CD8-positive, alpha-beta T cell (primary cell): ENCODE measurements at regions of chr11 and their contacts with region 1.

Region 1: DNA sequence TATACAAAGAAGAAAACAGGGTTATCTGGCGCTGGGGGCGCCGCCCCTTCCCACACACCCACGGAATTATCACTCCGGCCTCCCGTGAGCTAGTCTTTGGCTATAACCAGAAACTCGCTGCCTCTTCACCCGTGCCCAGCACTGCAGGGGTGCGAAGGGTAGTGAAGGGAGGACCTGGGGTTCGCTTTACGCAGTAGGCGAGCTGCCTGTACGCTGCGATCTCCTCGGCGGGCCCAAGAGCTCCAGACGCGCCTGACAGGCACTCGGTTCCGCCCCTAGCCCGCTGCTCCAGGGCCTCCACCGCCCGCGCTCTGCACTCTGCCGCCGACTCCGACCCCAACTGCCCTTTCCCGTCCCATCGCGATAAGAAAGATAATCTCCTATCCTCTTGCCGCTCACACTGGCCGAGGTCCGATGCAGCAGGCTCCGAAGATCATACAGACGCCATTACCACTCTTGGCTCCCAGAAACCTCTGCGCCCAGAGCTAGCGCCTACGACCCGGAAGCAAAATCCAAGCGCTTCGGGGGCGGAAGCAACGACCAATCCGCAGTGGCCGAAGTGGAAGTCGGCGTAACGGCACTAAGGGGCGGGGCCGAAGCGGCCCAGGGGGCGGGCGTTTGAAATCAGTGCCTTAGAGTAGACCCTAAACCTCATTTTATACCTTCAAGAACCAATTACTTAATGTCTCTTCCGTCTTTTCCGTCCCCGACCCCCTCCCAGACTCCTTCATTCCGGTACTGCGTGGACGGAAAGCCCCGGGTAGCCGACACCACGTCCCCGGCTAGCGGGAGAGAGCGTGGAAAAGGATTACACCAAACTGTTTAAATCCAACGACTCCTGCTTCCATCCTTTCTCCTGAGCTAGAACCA is at the starts of genes CWC15 and KDM4D:
- DNase-seq: peak; percentile 90 to 97 (median 95)
- ATAC-seq: peak; percentile 98
- H3K4me3 ChIP-seq: peak within 1 kb of the TSS; percentile 70 to 90
- H3K4me3 Mint-ChIP-seq: peak within 1 kb of the TSS; percentile 99
- H3K27ac ChIP-seq: peak within 1 kb of the TSS; percentile 72 to 83
- H3K27ac Mint-ChIP-seq: peak within 1 kb of the TSS; percentile 99
- H3K4me1 ChIP-seq: peaks cover 14% of the 10 kb centered on the region
- H3K4me1 Mint-ChIP-seq: peaks cover 34% of the 10 kb centered on the region
- H3K27me3 ChIP-seq: no peaks in the 10 kb centered on the region
- H3K27me3 Mint-ChIP-seq: no peaks in the 10 kb centered on the region
- CTCF ChIP-seq: no peak
- total RNA-seq, gene CWC15: 127 to 129 TPM
- total RNA-seq, gene KDM4D: 0.14 TPM in 1 of 2 experiments, not detected in the other

Region 2: DNA sequence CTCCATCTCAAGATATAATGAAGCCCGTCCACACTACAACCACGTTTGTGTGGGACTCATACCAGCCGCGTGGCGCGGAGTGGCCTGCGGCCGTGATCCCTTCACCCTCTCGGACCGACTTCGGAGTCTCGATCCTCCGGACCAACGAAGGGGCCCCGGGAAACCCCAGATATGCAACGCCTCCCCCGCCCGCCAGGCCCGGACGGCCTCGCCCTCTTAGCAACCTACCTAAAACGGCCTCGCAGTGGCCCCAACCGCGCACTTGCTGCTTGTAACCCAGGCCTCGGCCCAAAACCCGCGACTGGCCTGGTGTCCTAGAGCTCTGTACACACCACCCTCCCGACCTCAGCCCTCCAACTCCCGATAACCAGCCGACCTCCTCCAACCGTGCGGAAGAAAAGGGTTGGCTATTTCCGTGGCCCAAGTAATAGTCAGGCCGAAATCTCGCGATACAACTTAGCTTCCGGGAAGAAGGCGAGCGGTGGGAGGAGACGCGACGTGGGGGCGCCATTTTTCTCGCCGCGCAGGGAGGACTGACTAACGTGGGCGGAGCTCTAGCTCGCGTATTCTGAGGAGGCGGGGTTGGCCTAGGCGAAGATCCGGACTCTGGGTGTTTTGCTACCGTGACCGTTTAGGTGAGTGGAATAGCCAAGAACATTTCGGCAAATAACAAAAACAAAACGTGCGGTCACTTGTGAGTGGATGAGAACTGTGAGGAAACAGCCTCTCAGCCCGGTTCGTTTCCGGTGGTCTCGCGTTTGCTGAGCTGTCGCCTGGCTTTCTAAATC is 1232.0 kb before region 1 on chr11 and contains the starts of genes C11orf54 and TAF1D:
- CTCF ChIA-PET with region 1: no interaction called
- POLR2A ChIA-PET with region 1: interaction called, 3 read pairs
- intact Hi-C with region 1: loop called (anchors 2 to 10 kb)
- DNase-seq: peak; percentile 92 to 99 (median 96)
- ATAC-seq: peak; percentile 91
- H3K4me3 ChIP-seq: peak within 1 kb of the TSS; percentile 81 to 99
- H3K4me3 Mint-ChIP-seq: peak within 1 kb of the TSS; percentile 100
- H3K27ac ChIP-seq: peak within 1 kb of the TSS; percentile 89 to 95
- H3K27ac Mint-ChIP-seq: peak within 1 kb of the TSS; percentile 100
- H3K4me1 ChIP-seq: peaks cover 46% of the 10 kb centered on the region
- H3K4me1 Mint-ChIP-seq: peaks cover 69% of the 10 kb centered on the region
- H3K27me3 ChIP-seq: no peaks in the 10 kb centered on the region
- H3K27me3 Mint-ChIP-seq: no peaks in the 10 kb centered on the region
- CTCF ChIP-seq: no peak
- total RNA-seq, gene C11orf54: 7.7 to 9.4 TPM
- total RNA-seq, gene TAF1D: 167 to 190 TPM

Region 3: GRCh38 chr11:94493281-94494125 is 479.8 kb before region 1 on chr11 and contains the starts of genes ANKRD49 and MRE11:
- CTCF ChIA-PET with region 1: no interaction called
- POLR2A ChIA-PET with region 1: no interaction called
- intact Hi-C with region 1: loop called (anchors 1 to 5 kb)
- DNase-seq: peak; percentile 91 to 99 (median 96)
- ATAC-seq: peak; percentile 99
- H3K4me3 ChIP-seq: peak within 1 kb of the TSS; percentile 57 to 97
- H3K4me3 Mint-ChIP-seq: peak within 1 kb of the TSS; percentile 95
- H3K27ac ChIP-seq: peak within 1 kb of the TSS; percentile 72 to 94
- H3K27ac Mint-ChIP-seq: peak within 1 kb of the TSS; percentile 99
- H3K4me1 ChIP-seq: peaks cover 33% of the 10 kb centered on the region
- H3K4me1 Mint-ChIP-seq: peaks cover 50% of the 10 kb centered on the region
- H3K27me3 ChIP-seq: no peaks in the 10 kb centered on the region
- H3K27me3 Mint-ChIP-seq: no peaks in the 10 kb centered on the region
- CTCF ChIP-seq: no peak
- total RNA-seq, gene ANKRD49: 45.6 to 50.9 TPM
- total RNA-seq, gene MRE11: 12.3 to 14.7 TPM

Region 4: DNA sequence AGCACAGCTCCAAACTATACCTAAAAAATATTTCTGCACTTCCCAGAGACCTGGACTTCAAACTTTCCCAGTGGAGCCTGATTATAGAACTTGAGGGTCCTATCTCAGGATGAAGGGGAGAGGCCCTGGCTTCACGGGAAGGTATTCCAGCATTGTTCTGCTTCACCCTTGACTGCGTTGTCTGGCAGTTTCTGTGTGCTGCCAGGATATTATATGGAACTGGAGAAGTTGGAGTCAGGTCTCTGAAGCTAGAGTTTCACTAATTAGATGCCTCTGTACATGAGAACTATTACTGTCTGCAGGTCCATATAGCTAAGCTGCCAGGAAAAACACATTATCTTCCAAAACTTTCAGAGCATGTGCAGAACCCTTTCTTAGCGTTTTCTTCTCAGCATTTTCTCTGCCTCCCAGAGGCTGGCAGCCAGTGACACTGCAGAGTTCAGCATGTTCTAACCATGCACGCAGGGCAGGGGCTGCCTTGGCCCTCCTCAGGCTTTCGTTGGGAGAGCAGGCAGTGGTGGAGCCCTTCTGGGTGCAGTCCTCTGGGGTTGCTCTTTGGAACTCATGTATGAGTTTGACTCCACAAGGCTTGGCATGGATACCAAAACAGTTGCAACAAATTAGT is 99.3 kb before region 1 on chr11:
- CTCF ChIA-PET with region 1: no interaction called
- POLR2A ChIA-PET with region 1: no interaction called
- intact Hi-C with region 1: no loop called
- DNase-seq: no peak
- ATAC-seq: no peak
- H3K4me3 ChIP-seq: no peak overlapping the region
- H3K4me3 Mint-ChIP-seq: no peak overlapping the region
- H3K27ac ChIP-seq: no peak overlapping the region
- H3K27ac Mint-ChIP-seq: no peak overlapping the region
- H3K4me1 ChIP-seq: peaks cover 9% of the 10 kb centered on the region
- H3K4me1 Mint-ChIP-seq: peaks cover 14% of the 10 kb centered on the region
- H3K27me3 ChIP-seq: no peaks in the 10 kb centered on the region
- H3K27me3 Mint-ChIP-seq: no peaks in the 10 kb centered on the region
- CTCF ChIP-seq: no peak

Region 5: GRCh38 chr11:94885133-94885532 is 88.2 kb before region 1 on chr11:
- CTCF ChIA-PET with region 1: no interaction called
- POLR2A ChIA-PET with region 1: no interaction called
- intact Hi-C with region 1: no loop called
- DNase-seq: no peak
- ATAC-seq: no peak
- H3K4me3 ChIP-seq: no peak overlapping the region
- H3K4me3 Mint-ChIP-seq: no peak overlapping the region
- H3K27ac ChIP-seq: no peak overlapping the region
- H3K27ac Mint-ChIP-seq: no peak overlapping the region
- H3K4me1 ChIP-seq: no peaks in the 10 kb centered on the region
- H3K4me1 Mint-ChIP-seq: no peaks in the 10 kb centered on the region
- H3K27me3 ChIP-seq: no peaks in the 10 kb centered on the region
- H3K27me3 Mint-ChIP-seq: peaks cover 2% of the 10 kb centered on the region
- CTCF ChIP-seq: no peak

Region 6: GRCh38 chr11:94997437-94997836 is 24.1 kb after region 1 on chr11:
- CTCF ChIA-PET with region 1: no interaction called
- POLR2A ChIA-PET with region 1: no interaction called
- intact Hi-C with region 1: no loop called
- DNase-seq: no peak
- ATAC-seq: no peak
- H3K4me3 ChIP-seq: no peak overlapping the region
- H3K4me3 Mint-ChIP-seq: no peak overlapping the region
- H3K27ac ChIP-seq: no peak overlapping the region
- H3K27ac Mint-ChIP-seq: no peak overlapping the region
- H3K4me1 ChIP-seq: no peaks in the 10 kb centered on the region
- H3K4me1 Mint-ChIP-seq: no peaks in the 10 kb centered on the region
- H3K27me3 ChIP-seq: no peaks in the 10 kb centered on the region
- H3K27me3 Mint-ChIP-seq: peaks cover 2% of the 10 kb centered on the region
- CTCF ChIP-seq: no peak

Region 7: DNA sequence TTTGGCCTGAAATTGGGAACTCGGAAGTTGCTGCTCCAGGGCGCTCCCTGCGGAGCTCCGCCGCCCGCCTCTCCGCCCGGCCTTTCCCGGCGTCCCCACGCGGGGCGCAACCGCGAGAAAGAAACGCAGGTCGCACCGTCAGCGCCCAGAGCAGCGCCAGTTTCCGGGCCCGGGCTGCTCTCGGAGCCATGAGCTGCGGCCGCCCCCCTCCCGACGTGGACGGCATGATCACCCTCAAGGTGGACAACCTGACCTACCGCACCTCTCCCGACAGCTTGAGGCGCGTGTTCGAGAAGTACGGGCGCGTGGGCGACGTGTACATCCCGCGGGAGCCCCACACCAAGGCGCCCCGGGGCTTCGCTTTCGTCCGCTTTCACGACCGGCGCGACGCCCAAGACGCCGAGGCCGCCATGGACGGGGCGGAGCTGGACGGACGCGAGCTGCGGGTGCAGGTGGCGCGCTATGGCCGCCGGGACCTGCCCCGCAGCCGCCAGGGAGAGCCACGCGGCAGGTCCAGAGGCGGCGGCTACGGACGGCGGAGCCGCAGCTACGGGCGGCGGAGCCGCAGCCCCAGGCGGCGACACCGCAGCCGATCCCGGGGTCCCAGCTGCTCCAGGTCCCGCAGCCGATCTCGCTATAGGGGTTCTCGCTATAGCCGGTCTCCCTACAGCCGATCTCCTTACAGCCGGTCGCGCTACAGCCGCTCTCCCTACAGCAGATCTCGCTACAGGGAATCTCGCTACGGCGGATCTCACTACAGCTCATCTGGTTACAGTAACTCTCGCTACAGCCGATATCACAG is 93.9 kb after region 1 on chr11:
- CTCF ChIA-PET with region 1: interaction called, 8 read pairs
- POLR2A ChIA-PET with region 1: interaction called, 23 read pairs
- intact Hi-C with region 1: loop called (anchors 1 to 2 kb)
- DNase-seq: peak; percentile 45 to 88 (median 71)
- ATAC-seq: peak; percentile 61
- H3K4me3 ChIP-seq: peak overlapping the region; percentile 85 to 94
- H3K4me3 Mint-ChIP-seq: peak overlapping the region; percentile 96
- H3K27ac ChIP-seq: peak overlapping the region; percentile 90 to 92
- H3K27ac Mint-ChIP-seq: peak overlapping the region; percentile 97
- H3K4me1 ChIP-seq: peaks cover 23% of the 10 kb centered on the region
- H3K4me1 Mint-ChIP-seq: peaks cover 33% of the 10 kb centered on the region
- H3K27me3 ChIP-seq: no peaks in the 10 kb centered on the region
- H3K27me3 Mint-ChIP-seq: no peaks in the 10 kb centered on the region
- CTCF ChIP-seq: peak; percentile 46

Region 8: DNA sequence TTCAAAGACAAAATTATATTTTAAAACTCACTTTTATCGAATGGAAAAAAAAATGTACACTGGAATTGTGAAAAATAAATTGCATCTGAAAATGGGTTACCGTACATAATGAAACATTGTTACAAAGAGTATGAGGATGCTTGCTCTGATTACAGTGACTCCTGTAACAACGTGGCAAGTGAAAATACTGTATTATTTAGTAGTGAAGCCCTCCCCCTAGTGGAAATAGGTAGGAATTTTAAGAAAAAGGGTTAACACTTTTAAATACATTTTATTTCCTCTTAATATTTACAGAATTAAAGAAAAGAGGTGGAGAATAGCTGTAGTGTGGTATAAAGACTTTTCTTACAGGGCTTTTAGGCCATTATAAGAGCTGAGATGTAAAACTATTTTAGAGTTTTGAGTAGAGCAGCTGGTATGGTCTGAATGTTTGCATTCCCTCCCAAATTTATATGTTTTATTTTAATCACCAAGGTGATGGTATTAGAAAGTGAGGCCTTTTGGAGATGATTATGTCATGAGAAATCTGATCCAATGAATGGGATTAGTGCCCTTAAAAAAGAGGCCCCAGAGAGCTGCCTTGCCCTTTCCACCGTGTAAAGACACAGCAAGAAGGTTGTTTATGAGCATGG is 791.0 kb after region 1 on chr11:
- CTCF ChIA-PET with region 1: interaction called, 3 read pairs
- POLR2A ChIA-PET with region 1: no interaction called
- intact Hi-C with region 1: loop called (anchors 1 to 5 kb)
- DNase-seq: peak in 2 of 9 experiments; percentile 61 to 73
- ATAC-seq: peak; percentile 86
- H3K4me3 ChIP-seq: no peak overlapping the region
- H3K4me3 Mint-ChIP-seq: no peak overlapping the region
- H3K27ac ChIP-seq: no peak overlapping the region
- H3K27ac Mint-ChIP-seq: no peak overlapping the region
- H3K4me1 ChIP-seq: no peaks in the 10 kb centered on the region
- H3K4me1 Mint-ChIP-seq: no peaks in the 10 kb centered on the region
- H3K27me3 ChIP-seq: peaks cover 0 to 2% of the 10 kb centered on the region in 2 experiments
- H3K27me3 Mint-ChIP-seq: peaks cover 5% of the 10 kb centered on the region
- CTCF ChIP-seq: peak; percentile 88

Region 9: GRCh38 chr11:96424693-96425092 is 1451.4 kb after region 1 on chr11:
- CTCF ChIA-PET with region 1: no interaction called
- POLR2A ChIA-PET with region 1: no interaction called
- intact Hi-C with region 1: loop called in 1 of 2 experiments (anchors 10 kb)
- DNase-seq: no peak
- ATAC-seq: no peak
- H3K4me3 ChIP-seq: no peak overlapping the region
- H3K4me3 Mint-ChIP-seq: no peak overlapping the region
- H3K27ac ChIP-seq: no peak overlapping the region
- H3K27ac Mint-ChIP-seq: no peak overlapping the region
- H3K4me1 ChIP-seq: no peaks in the 10 kb centered on the region
- H3K4me1 Mint-ChIP-seq: no peaks in the 10 kb centered on the region
- H3K27me3 ChIP-seq: no peaks in the 10 kb centered on the region
- H3K27me3 Mint-ChIP-seq: peaks cover 28% of the 10 kb centered on the region
- CTCF ChIP-seq: no peak